ENCODE measurements at regions of chr1 and their contacts with region 1.

Region 1: DNA sequence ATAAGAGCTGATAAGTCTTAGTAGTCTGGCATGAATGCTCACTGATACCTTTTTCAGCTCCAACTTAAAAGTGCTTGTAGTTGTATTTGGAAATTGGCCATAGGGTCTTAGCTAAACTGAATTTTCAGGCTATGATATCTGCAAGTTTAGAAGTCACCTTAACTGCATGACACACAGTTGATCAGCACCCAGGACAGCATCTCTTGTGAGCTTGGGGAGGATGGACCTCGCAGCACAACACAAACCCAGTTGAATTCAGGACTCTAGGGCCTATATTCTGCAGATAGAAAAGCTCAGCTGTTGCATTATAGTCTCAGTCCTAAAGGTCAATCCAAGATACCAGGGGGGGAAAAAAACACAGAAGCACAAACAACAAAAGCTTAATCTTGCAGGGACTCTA is 394.3 kb downstream of the KCNH1 start:
- DNase-seq: no peak
- H3K4me3 ChIP-seq: no peak overlapping the region
- CTCF ChIP-seq: no peak
- POLR2A ChIP-seq: no peak

Region 2: GRCh38 chr1:210496063-210496462 is 243.6 kb before region 1 on chr1:
- intact Hi-C with region 1: loop called (anchors 2 kb)
- DNase-seq: no peak
- H3K4me3 ChIP-seq: no peak overlapping the region
- CTCF ChIP-seq: no peak
- POLR2A ChIP-seq: no peak

Region 3: GRCh38 chr1:210653771-210654170 is 85.9 kb before region 1 on chr1:
- intact Hi-C with region 1: no loop called
- DNase-seq: no peak
- H3K4me3 ChIP-seq: no peak overlapping the region
- CTCF ChIP-seq: no peak
- POLR2A ChIP-seq: no peak

Measured in lower leg skin (tissue), 4 donors.